ENCODE measurements at regions of chr3 and their contacts with region 1.

Region 1: GRCh38 chr3:134794950-134795745 is at the start of gene EPHB1:
- DNase-seq: peak; percentile 72
- ATAC-seq: peak; percentile 86 to 91
- total RNA-seq, gene EPHB1: 0.85 to 1.7 TPM

Region 2: GRCh38 chr3:134929976-134930375 is 134.8 kb after region 1 on chr3:
- intact Hi-C with region 1: no loop called
- DNase-seq: no peak
- ATAC-seq: no peak

Region 3: GRCh38 chr3:135503760-135504686 is 708.9 kb after region 1 on chr3:
- intact Hi-C with region 1: loop called (anchors 2 to 10 kb)
- DNase-seq: peak; percentile 63
- ATAC-seq: peak; percentile 55 to 74

Measured in left cardiac atrium (tissue), 4 donors.